ENCODE measurements at regions of chr13 and their contacts with region 1.

Region 1: GRCh38 chr13:27449936-27450828 is at the start of gene MTIF3:
- DNase-seq: peak; percentile 94 to 98
- ATAC-seq: peak; percentile 92 to 95 (median 93)
- H3K4me3 ChIP-seq: peak within 1 kb of the TSS; percentile 95
- H3K27ac ChIP-seq: peak within 1 kb of the TSS; percentile 99
- H3K4me1 ChIP-seq: peaks cover 38% of the 10 kb centered on the region
- H3K27me3 ChIP-seq: no peaks in the 10 kb centered on the region
- CTCF ChIP-seq: no peak
- total RNA-seq, gene MTIF3: 48.1 to 72.4 (median 64.9) TPM

Region 2: GRCh38 chr13:27401210-27401609 is 49.0 kb before region 1 on chr13:
- intact Hi-C with region 1: no loop called
- DNase-seq: peak in 1 of 2 donors; percentile 30
- ATAC-seq: no peak
- H3K4me3 ChIP-seq: no peak overlapping the region
- H3K27ac ChIP-seq: no peak overlapping the region
- H3K4me1 ChIP-seq: no peaks in the 10 kb centered on the region
- H3K27me3 ChIP-seq: peaks cover 0 to under 1% (median 0%) of the 10 kb centered on the region in 3 donors
- CTCF ChIP-seq: no peak

Region 3: DNA sequence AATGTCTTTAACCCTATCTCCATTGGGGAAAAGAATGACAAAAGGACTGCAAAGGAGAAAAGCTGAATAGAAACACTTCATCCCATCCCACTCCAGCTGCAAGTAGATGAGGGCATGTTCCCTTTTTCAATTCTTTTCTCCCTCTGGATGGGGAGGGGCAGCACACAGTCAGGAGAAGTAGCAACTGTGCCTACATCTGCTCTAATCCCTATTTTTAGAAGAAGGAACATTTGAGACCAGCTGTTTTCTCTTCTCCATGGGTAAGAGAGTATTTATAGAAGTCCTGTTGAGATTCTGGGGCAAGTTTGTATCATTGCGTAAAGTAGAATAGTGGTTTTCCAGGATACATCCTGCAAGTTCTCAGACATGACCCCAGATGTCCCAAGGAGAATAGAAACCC is 35.1 kb before region 1 on chr13:
- intact Hi-C with region 1: loop called (anchors 5 kb)
- DNase-seq: no peak
- ATAC-seq: peak; percentile 97 to 100 (median 99)
- H3K4me3 ChIP-seq: peak overlapping the region; percentile 21
- H3K27ac ChIP-seq: peak overlapping the region; percentile 92
- H3K4me1 ChIP-seq: peaks cover 16% of the 10 kb centered on the region
- H3K27me3 ChIP-seq: no peaks in the 10 kb centered on the region
- CTCF ChIP-seq: no peak

Region 4: GRCh38 chr13:27424246-27425157 is 25.7 kb before region 1 on chr13 and contains the start of gene GTF3A:
- intact Hi-C with region 1: loop called (anchors 2 kb)
- DNase-seq: peak; percentile 89 to 93
- ATAC-seq: peak; percentile 90 to 92 (median 92)
- H3K4me3 ChIP-seq: peak within 1 kb of the TSS; percentile 93
- H3K27ac ChIP-seq: peak within 1 kb of the TSS; percentile 100
- H3K4me1 ChIP-seq: peaks cover 27% of the 10 kb centered on the region
- H3K27me3 ChIP-seq: no peaks in the 10 kb centered on the region
- CTCF ChIP-seq: no peak
- total RNA-seq, gene GTF3A: 141 to 201 (median 159) TPM

Region 5: GRCh38 chr13:27644302-27644701 is 194.1 kb after region 1 on chr13:
- intact Hi-C with region 1: no loop called
- DNase-seq: no peak
- ATAC-seq: no peak
- H3K4me3 ChIP-seq: no peak overlapping the region
- H3K27ac ChIP-seq: no peak overlapping the region
- H3K4me1 ChIP-seq: peaks cover 21% of the 10 kb centered on the region
- H3K27me3 ChIP-seq: no peaks in the 10 kb centered on the region
- CTCF ChIP-seq: no peak

Region 6: GRCh38 chr13:27826379-27827353 is 376.5 kb after region 1 on chr13:
- intact Hi-C with region 1: no loop called
- DNase-seq: peak; percentile 69 to 81
- ATAC-seq: peak; percentile 86 to 96 (median 92)
- H3K4me3 ChIP-seq: peak overlapping the region; percentile 23
- H3K27ac ChIP-seq: no peak overlapping the region
- H3K4me1 ChIP-seq: peaks cover 5% of the 10 kb centered on the region
- H3K27me3 ChIP-seq: peaks cover 1 to 42% (median 5%) of the 10 kb centered on the region in 3 donors
- CTCF ChIP-seq: peak; percentile 93